ENCODE measurements at regions of chr6 and their contacts with region 1.

Region 1: DNA sequence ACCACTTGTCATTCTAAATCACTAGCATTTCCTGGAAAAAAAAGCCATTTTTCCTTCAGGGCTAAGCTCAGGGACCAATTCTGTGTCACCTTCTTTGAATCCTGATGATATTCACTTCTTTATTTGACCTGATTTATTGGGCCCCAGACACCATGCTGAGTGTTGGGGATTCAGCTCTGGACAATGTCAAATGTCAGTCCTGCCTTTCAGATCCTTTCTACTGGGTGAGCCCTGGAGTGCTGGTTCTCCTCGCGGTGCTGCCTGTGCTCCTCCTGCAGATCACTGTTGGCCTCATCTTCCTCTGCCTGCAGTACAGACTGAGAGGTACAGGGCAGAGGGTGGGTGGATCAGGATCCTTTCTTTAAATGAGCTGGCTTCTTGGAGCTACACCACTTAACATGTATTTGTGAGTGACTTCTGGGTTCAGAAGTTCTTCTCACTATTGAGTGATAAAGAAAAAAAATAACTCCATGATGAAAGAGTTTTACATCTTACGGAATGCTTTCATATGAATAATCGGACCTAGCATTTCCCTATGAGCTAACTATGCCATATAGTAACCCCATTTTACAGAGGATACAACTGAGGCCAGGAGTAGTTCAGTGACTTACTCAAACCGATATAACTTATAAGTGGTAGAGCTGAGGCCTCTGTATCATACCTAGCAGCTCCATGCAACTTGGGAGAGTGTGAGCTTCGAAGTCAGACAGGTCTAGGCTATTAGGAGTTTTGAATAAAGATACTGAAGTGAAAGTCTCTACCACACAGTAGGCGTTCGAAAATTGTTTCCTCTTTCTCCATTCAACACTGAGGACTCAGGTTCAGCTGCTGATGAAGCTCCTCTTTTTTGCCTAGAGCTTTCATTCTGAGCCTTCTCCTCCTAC is 9.3 kb downstream of the MOG start:
- DNase-seq: no peak
- H3K4me3 Mint-ChIP-seq: no peak overlapping the region
- H3K27ac Mint-ChIP-seq: no peak overlapping the region
- H3K4me1 Mint-ChIP-seq: no peaks in the 10 kb centered on the region
- H3K27me3 Mint-ChIP-seq: no peaks in the 10 kb centered on the region
- CTCF ChIP-seq: no peak

Region 2: GRCh38 chr6:29676981-29677601 is 10.9 kb after region 1 on chr6:
- CTCF ChIA-PET with region 1: interaction called, 3 read pairs
- POLR2A ChIA-PET with region 1: interaction called, 11 read pairs
- intact Hi-C with region 1: no loop called
- DNase-seq: peak; percentile 51
- H3K4me3 Mint-ChIP-seq: no peak overlapping the region
- H3K27ac Mint-ChIP-seq: peak overlapping the region; percentile 97
- H3K4me1 Mint-ChIP-seq: peaks cover 24% of the 10 kb centered on the region
- H3K27me3 Mint-ChIP-seq: no peaks in the 10 kb centered on the region
- CTCF ChIP-seq: no peak

Region 3: DNA sequence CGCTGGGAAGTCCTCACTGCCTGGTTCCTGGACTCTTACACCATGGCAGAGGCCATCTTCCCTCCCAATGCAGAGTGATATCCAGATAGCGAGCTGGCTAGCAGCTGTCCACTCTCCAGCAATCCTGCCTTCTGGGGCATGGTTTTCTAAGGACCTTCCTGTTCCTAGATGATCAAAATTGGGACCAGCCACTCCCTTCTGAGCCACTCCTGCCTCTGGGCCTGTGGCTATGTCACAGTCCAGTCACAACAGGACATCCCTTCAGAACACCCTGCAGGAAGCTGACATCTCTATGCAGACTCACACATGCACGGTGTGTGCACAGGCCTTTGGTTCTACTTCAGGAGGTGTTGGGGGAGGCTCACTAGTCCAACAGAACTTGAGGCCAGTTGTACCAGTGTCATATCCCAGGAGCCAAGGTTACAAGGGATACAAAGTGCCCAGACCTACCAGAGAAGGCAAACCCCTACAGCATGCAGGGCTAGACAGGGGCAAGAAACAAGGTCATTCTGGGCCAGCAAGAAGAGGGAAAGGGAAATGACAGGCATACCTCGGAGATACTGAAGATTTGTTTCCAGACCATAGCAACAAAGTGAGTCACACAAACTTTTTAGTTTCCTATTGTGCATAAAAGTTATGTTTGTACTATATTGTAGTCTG is 1859.9 kb after region 1 on chr6:
- CTCF ChIA-PET with region 1: no interaction called
- POLR2A ChIA-PET with region 1: no interaction called
- intact Hi-C with region 1: no loop called
- DNase-seq: no peak
- H3K4me3 Mint-ChIP-seq: no peak overlapping the region
- H3K27ac Mint-ChIP-seq: no peak overlapping the region
- H3K4me1 Mint-ChIP-seq: no peaks in the 10 kb centered on the region
- H3K27me3 Mint-ChIP-seq: peaks cover 8% of the 10 kb centered on the region
- CTCF ChIP-seq: no peak

Measured in MCF 10A (cell line).